ENCODE measurements at regions of chr14 and their contacts with region 1.

Region 1: DNA sequence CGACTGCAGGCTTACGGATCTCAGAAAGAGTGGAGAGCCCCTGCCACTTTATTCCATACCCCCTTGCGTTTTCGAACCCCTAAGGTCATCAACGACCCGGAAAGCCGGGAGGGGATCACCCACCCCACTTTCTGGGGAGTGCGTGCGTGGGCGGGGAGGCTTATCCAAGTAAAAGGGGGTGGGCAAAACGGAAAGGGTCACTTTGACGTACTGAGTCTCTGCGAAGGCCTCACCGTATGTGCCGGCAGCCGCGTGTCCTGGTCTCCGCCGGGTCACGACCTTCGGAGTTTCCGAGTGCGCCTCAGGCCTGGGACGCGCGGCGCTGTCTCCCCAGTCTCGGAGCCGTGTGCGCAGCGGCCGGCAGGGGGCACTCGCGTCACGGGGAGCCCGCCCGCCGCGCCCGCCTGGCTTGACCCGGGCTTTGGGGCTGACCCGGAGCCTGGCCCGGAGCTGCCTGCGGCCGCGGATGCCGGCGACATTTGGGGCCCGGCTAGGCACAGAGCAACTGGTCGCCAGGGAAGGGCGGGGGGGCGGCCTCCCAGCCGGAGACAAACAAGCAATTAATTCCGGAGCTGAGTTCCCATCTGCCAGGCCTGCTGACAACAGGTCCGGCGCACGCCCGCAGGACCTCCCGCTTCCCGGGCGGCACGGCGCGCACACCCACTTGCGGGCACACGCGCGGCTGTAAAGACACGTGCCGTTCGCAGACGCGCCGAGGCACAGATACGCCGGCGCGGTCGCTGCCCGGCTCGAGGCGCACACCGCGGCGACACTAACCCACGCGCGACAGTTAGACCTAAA is 890 bp upstream of the KIF26A start:
- DNase-seq: peak; percentile 76
- H3K4me3 ChIP-seq: peak overlapping the region; percentile 73
- H3K27ac ChIP-seq: no peak overlapping the region
- H3K4me1 ChIP-seq: peaks cover 52% of the 10 kb centered on the region
- H3K27me3 ChIP-seq: peaks cover 30% of the 10 kb centered on the region
- CTCF ChIP-seq: peak; percentile 73

Region 2: DNA sequence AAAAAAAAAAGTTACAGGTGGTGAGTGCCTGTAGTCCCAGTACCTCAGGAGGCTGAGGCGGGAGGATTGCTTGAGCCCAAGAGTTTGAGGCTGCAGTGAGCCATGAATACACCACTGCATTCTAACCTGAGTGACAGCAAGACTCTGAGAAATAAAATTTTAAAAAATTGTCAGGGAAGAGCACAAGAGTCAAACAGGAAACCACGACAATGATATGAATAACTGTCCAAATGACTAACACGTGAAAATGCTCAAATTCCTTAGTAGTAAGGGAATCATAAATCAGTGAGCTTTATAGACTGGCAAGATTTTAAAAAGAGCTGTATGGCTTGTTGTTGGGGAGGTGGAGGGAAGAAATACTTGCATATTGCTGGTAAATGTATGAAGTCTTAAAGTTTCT is 64.9 kb before region 1 on chr14:
- CTCF ChIA-PET with region 1: no interaction called
- POLR2A ChIA-PET with region 1: no interaction called
- intact Hi-C with region 1: no loop called
- DNase-seq: no peak
- H3K4me3 ChIP-seq: no peak overlapping the region
- H3K27ac ChIP-seq: no peak overlapping the region
- H3K4me1 ChIP-seq: no peaks in the 10 kb centered on the region
- H3K27me3 ChIP-seq: no peaks in the 10 kb centered on the region
- CTCF ChIP-seq: no peak

Region 3: DNA sequence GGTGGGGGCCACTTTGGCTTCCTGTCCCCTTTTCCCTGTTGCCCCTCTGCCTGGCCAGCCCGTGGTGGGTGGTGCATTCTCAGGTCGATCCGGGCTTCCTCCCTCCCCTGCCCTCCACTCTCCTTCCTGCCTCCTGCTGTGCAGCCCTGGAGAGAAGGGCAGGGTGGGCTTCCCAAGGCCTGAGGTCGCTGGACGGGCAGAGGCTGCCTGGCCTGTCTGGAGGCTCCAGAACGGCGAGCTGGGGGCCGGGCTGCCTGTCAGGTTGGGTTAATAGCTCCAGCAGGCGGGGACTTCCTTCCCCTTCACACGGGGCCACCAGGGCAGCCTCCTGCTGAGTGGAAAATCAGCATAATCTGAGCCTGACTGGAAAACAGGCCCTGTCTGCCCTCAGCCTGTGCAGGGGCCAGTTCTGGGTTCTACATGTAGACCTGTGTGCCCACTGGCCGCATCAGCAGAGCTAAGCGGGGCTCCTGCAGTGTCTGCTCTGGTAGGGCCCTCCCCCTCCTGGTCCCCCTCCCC is 12.2 kb after region 1 on chr14:
- CTCF ChIA-PET with region 1: interaction called, 21 read pairs
- POLR2A ChIA-PET with region 1: no interaction called
- intact Hi-C with region 1: no loop called
- DNase-seq: peak; percentile 85
- H3K4me3 ChIP-seq: no peak overlapping the region
- H3K27ac ChIP-seq: no peak overlapping the region
- H3K4me1 ChIP-seq: peaks cover 23% of the 10 kb centered on the region
- H3K27me3 ChIP-seq: no peaks in the 10 kb centered on the region
- CTCF ChIP-seq: no peak

Region 4: DNA sequence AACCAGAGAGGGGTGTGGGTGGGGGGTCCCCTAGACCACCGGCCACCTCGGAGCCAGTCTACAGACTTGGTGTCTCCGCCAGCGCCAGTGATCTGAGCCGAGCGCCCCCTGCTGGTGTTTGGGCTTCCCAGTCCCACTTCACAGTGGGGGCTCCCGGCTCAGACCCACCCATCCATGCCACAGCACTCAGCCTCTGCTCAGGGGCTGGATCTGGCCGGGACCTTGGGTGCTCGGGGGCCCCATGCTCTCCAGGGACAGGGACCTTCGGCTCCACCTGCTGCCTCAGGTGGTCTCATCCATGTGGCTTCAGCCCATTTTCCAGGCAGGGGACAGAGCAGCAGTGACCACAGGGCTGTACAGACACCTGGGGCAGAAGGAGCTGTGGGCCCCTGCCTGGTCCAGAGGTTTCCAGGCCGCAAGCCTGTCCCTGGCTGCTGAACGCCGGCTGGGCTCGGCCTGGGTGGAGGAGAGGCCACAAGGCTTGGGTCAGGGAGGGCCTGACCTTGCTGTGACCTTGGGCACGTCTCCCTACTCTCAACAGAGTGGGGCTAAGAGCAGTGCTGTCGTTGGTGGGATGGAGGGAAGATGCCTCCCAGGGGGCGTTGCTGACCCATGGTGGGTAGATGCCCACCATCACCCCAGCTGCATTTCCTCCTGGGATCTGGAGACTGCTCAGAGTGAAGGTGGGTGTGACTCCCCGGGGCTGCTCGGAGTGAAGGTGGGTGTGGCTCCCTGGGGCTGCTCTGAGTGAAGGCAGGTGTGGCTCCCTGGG is 87.2 kb after region 1 on chr14:
- CTCF ChIA-PET with region 1: interaction called, 5 read pairs
- POLR2A ChIA-PET with region 1: no interaction called
- intact Hi-C with region 1: loop called (anchors 2 kb)
- DNase-seq: peak; percentile 88
- H3K4me3 ChIP-seq: peak overlapping the region; percentile 32
- H3K27ac ChIP-seq: peak overlapping the region; percentile 93
- H3K4me1 ChIP-seq: peaks cover 53% of the 10 kb centered on the region
- H3K27me3 ChIP-seq: no peaks in the 10 kb centered on the region
- CTCF ChIP-seq: peak; percentile 89

Region 5: DNA sequence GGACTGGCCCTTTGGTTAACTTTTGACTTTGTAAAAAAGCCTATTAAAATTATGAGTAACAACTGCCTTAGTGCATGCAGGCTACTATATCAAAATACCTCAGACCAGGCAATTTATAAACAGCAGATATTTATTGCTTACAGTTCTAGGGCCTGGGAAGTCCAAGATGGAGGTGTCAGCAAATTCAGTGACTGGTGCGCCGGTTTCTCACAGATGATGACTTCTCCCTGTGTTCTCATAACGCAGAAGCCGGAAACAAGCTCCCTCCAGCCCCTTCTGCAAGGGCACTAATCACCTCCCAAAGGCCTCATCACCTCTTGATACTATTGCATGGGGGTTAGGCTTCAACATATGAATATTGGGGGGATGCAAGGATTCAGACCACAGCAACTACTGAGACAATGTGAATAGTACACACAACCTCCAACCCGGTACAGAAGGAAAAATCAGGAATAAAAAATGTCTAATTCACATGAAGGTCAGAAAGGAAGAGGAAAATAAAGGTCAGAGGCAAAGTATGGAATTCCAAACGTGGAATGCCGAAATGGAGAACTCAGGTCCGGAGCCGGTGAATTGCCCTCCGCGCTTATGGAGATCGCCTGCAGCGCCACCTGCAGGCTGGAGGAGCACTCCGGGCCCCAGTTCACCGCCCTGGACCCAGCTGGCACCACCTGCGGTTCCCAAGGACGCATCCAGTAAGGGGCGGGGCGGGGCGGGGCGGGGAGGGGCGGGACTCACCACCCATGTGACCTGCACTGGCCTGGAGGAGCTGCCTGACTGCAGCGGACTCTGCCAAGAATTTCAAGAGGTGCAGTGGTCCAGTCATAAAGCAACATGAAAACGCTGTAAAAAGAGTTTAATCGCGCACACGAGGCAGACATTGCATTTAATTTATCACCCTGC is 204.3 kb after region 1 on chr14:
- CTCF ChIA-PET with region 1: interaction called, 9 read pairs
- POLR2A ChIA-PET with region 1: no interaction called
- intact Hi-C with region 1: loop called (anchors 10 kb)
- DNase-seq: peak; percentile 91
- H3K4me3 ChIP-seq: peak overlapping the region; percentile 29
- H3K27ac ChIP-seq: no peak overlapping the region
- H3K4me1 ChIP-seq: no peaks in the 10 kb centered on the region
- H3K27me3 ChIP-seq: peaks cover 17% of the 10 kb centered on the region
- CTCF ChIP-seq: peak; percentile 83

Region 6: DNA sequence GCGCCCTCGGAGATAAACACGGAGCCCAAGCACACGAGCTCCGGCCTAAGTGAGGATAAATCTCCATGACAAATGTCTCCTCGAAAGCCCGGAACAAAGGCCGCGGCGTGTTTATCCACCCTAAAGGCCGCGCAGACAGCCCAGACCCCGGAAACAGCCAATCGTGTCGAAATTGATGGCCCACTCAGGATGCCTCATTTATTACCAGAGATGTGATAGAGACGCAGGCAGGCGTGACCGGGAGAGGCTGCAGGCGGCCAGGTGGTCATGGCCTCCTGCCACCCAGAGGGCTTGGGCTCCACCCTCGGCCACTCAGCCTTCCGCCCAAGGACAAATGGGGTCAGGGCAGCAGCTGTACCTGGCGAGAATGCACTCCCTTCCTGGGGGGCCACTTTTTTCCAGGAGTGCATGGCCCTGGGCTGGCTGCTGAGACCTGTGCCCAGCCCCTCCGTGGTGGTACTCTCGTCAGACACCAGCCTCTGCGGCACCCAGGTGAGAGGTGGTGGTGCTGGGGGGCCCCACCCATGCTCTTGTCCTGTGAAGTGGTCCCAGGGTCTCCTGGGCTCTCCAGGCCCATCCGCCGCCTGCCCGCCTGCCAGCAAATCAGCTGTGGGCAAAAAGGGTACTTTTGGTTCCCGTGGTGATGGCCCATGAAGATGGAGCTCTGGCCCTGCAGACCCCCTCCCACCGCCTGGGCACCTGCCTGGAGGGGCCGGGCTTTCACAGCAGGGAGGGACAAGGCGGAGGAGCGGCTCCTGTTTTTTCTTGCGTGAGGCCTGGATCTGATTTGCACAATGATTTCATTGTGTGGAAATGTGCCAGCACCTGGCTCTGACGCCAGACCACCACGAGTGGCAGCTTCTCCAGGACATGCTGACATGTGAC is 230.6 kb after region 1 on chr14:
- CTCF ChIA-PET with region 1: no interaction called
- POLR2A ChIA-PET with region 1: no interaction called
- intact Hi-C with region 1: loop called (anchors 5 kb)
- DNase-seq: no peak
- H3K4me3 ChIP-seq: no peak overlapping the region
- H3K27ac ChIP-seq: no peak overlapping the region
- H3K4me1 ChIP-seq: no peaks in the 10 kb centered on the region
- H3K27me3 ChIP-seq: no peaks in the 10 kb centered on the region
- CTCF ChIP-seq: no peak

Region 7: GRCh38 chr14:104563742-104564615 is 426.5 kb after region 1 on chr14:
- CTCF ChIA-PET with region 1: interaction called, 3 read pairs
- POLR2A ChIA-PET with region 1: no interaction called
- intact Hi-C with region 1: loop called (anchors 5 kb)
- DNase-seq: peak; percentile 56
- H3K4me3 ChIP-seq: no peak overlapping the region
- H3K27ac ChIP-seq: no peak overlapping the region
- H3K4me1 ChIP-seq: no peaks in the 10 kb centered on the region
- H3K27me3 ChIP-seq: peaks cover 7% of the 10 kb centered on the region
- CTCF ChIP-seq: peak; percentile 74

Region 8: DNA sequence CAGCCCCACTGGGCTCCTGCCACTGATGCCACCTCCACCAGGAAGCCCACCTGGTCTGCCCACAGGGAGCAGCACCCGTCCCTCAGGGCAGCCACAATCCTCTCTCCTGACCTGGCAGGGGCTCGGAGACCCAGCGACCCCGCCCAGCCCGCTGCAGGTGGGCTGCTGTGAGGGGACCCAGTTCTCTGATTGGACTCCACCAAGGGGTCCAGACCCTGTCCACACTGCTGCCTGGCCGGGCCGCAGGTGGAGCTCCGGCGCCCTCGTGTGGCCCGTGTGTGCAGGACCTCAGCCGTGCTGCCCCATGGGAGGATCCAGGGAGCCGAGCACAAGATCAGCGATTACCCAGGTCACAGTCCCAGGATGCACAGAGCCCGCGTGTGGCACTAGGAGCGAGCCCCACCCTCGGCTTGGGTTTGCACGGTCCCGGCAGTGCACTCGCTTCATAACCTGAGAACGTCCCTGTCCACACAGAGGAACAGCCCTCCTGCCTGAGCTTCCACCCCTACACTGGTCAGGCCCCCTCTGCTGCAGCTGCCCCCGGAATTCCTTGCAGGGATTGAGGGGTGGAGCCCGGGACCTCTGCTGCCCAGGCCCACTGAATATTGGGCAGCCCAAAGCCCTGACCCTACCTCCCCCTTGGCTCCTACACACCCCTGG is 502.5 kb after region 1 on chr14:
- CTCF ChIA-PET with region 1: interaction called, 4 read pairs
- POLR2A ChIA-PET with region 1: no interaction called
- intact Hi-C with region 1: loop called (anchors 5 kb)
- DNase-seq: peak; percentile 81
- H3K4me3 ChIP-seq: no peak overlapping the region
- H3K27ac ChIP-seq: no peak overlapping the region
- H3K4me1 ChIP-seq: peaks cover 15% of the 10 kb centered on the region
- H3K27me3 ChIP-seq: no peaks in the 10 kb centered on the region
- CTCF ChIP-seq: peak; percentile 98